ENCODE measurements at regions of chr2 and their contacts with region 1.

Region 1: DNA sequence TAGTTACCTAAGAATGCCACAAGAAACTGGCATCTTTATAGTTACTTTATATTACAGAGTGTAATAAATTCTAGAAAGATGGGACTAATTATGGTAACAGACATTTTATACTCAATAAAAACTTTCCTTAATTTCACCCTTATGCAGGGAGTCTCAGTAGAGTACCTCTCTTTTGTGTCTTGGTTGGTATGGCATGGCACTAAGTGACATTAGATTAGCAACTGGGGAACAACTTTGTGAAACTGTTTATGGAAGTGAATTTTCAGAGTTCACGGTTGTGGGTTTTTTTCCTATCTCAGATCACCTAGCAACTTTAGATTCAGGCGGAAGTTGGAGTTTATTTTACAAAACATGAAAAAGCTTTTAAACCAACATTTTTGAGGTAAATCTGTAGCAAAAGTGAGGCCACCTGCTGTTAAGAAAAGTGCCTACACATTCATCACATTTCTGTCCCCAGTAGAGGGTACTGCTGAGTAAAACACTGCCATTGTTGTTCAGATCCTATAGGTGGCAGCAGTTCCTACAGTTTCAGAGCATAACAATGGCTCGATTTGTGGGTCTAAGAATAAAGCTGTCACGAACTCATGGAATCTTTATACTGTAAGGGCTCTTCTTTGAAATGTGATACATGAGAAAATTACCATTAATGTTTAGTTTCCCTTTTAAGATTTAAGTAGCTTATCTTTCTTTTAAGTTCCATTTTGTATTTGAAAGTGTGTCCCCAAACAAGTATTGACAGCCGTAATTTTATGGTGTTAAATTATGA is 117.6 kb downstream of the CAMKMT start:
- DNase-seq: peak; percentile 69
- H3K4me3 ChIP-seq: no peak overlapping the region
- H3K27ac ChIP-seq: no peak overlapping the region
- H3K4me1 ChIP-seq: no peaks in the 10 kb centered on the region
- H3K27me3 ChIP-seq: no peaks in the 10 kb centered on the region
- CTCF ChIP-seq: peak; percentile 100

Region 2: DNA sequence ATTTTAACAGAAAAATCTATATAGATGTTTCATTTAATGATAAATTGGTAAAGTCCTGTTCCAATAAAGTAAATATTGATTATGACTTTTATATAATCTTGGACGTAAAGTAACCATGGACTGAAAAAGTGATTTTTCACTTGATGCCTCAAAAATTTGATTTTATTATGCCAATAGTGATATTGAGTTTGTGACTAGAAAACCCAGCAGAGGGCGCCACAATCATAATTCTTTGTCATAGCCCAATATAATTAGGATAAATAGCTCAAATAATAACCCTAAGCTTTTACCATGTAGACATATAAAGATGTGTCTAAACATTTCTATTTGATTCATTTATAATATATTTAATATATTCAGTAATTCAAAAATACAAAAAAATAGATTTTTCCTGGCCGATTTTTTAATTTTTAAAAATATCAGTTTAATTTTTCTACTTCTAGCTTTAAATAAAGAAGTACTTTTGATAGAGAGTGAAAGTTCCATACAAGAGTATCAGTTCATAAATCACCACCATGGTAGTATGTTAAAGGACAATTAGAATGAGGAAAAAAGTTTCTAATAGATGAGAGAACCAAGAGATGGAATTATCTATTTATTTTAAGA is 86.9 kb before region 1 on chr2:
- CTCF ChIA-PET with region 1: interaction called, 9 read pairs
- dilution Hi-C with region 1: no loop called
- in situ Hi-C with region 1: no loop called
- intact Hi-C with region 1: loop called (anchors 2 kb)
- DNase-seq: peak; percentile 2
- H3K4me3 ChIP-seq: no peak overlapping the region
- H3K27ac ChIP-seq: no peak overlapping the region
- H3K4me1 ChIP-seq: no peaks in the 10 kb centered on the region
- H3K27me3 ChIP-seq: no peaks in the 10 kb centered on the region
- CTCF ChIP-seq: peak; percentile 58 to 71

Region 3: DNA sequence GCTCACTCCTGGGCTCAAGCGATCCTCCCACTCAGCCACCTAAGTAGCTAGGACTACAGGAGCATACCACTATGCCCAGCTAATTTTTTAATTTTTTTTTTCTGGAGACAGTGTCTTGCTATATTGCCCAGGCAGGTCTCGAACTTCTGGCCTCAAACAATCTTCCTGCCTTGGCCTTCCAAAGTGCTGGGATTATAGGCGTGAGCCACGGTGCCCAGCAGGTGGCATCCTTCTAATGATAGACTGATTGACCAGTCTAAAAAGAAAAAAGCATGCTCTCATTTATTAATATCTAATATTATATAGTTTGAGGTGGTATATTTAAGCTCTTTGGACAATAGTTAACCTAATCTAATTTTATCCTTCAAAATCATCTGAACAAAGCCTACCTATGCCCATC is 81.0 kb after region 1 on chr2:
- CTCF ChIA-PET with region 1: interaction called, 3 read pairs
- dilution Hi-C with region 1: no loop called
- in situ Hi-C with region 1: no loop called
- intact Hi-C with region 1: loop called (anchors 5 kb)
- DNase-seq: no peak
- H3K4me3 ChIP-seq: no peak overlapping the region
- H3K27ac ChIP-seq: no peak overlapping the region
- H3K4me1 ChIP-seq: peaks cover 2% of the 10 kb centered on the region
- H3K27me3 ChIP-seq: no peaks in the 10 kb centered on the region
- CTCF ChIP-seq: peak; percentile 33 to 64

Region 4: DNA sequence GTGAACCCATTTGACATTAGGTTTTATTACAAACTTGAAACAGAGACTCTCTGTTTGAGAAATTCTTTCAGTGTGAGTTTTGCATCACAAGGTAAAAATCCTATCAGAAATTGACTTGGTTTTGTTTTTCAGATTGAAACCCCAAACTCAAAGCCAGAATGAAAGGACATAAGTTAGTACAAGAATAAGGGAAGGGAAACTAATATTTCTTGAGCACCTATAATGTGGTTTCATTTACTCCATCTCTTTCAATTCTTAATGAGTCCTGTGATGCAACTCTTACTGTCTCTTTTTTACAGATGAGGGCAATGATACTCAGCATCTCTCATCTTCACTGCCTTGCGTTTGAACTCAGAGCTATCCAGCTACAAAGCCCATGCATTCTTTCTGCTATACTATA is 252.2 kb after region 1 on chr2:
- CTCF ChIA-PET with region 1: no interaction called
- dilution Hi-C with region 1: no loop called
- in situ Hi-C with region 1: loop called in 1 of 2 experiments (anchors 25 kb)
- intact Hi-C with region 1: no loop called
- DNase-seq: no peak
- H3K4me3 ChIP-seq: no peak overlapping the region
- H3K27ac ChIP-seq: no peak overlapping the region
- H3K4me1 ChIP-seq: no peaks in the 10 kb centered on the region
- H3K27me3 ChIP-seq: no peaks in the 10 kb centered on the region
- CTCF ChIP-seq: no peak

Measured in mammary epithelial cell (primary cell).